Gastrocnemius medialis (tissue), 4 donors: ENCODE measurements at regions of chr7 and their contacts with region 1.

Region 1: GRCh38 chr7:8217200-8218068 is 44.5 kb downstream of the ICA1 start:
- DNase-seq: no peak
- ATAC-seq: peak; percentile 60 to 63
- H3K4me3 ChIP-seq: no peak overlapping the region
- H3K27ac ChIP-seq: no peak overlapping the region
- H3K4me1 ChIP-seq: peaks cover 0 to 8% of the 10 kb centered on the region in 2 donors
- H3K27me3 ChIP-seq: no peaks in the 10 kb centered on the region
- CTCF ChIP-seq: peak; percentile 65 to 80 (median 72)
- POLR2A ChIP-seq: no peak

Region 2: DNA sequence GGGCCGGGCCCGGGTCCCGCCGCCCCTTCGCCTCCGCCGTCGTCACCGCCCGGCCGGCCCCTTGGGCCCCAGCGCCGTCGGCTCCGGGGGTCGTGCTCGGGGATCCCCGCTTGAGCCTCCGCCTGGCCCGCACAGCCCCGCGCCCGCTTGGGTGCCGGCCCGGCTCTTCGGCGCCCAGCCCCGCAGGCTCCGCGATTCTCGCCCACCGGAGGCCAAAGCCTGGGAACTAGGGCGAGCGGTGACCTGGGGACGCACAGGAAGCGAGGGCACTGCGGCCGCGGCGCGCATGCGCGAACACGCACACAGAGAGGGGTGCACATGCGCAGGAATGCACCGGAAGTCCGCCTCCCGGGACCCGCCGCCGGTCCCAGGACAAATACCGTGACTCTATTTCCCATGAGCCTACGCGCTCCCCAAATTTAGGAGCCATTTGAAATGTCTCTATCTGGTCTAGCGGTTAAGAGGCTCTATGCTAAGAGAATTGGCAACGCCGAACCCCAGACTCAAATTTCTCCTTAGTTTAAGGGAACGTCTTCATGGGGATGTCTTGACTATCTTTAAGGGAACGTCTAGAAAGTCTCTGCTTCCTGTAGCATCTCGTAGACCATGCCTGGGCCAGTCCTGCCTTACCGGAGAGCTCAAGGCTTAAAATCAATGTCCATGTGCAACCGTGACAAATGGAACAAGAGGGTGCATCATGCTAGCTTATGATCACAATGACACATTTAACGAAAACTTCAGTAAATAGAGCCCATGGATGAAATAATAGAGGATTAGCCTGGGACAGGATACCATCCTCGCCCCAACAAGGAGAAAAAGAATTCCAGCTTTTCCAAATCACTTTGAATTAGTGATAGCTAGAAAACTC is 1510.5 kb before region 1 on chr7 and contains the start of gene ZNF12:
- in situ Hi-C with region 1: no loop called
- intact Hi-C with region 1: loop called (anchors 10 kb)
- DNase-seq: peak; percentile 93 to 96
- ATAC-seq: peak; percentile 98
- H3K4me3 ChIP-seq: peak within 1 kb of the TSS; percentile 75 to 99 (median 88)
- H3K27ac ChIP-seq: peak within 1 kb of the TSS; percentile 80 to 90 (median 84)
- H3K4me1 ChIP-seq: peaks cover 22 to 23% of the 10 kb centered on the region in 2 donors
- H3K27me3 ChIP-seq: no peaks in the 10 kb centered on the region
- CTCF ChIP-seq: peak in 1 of 5 experiments; percentile 10
- POLR2A ChIP-seq: peak; percentile 63 to 81
- total RNA-seq, gene ZNF12: 4.5 to 8.9 (median 5.3) TPM

Region 3: GRCh38 chr7:7424151-7424873 is 793.1 kb before region 1 on chr7:
- in situ Hi-C with region 1: loop called (anchors 10 to 25 kb)
- intact Hi-C with region 1: loop called (anchors 2 kb)
- DNase-seq: peak; percentile 11 to 33
- ATAC-seq: peak; percentile 76 to 87
- H3K4me3 ChIP-seq: peak overlapping the region; percentile 39 to 59 (median 52)
- H3K27ac ChIP-seq: no peak overlapping the region
- H3K4me1 ChIP-seq: no peaks in the 10 kb centered on the region
- H3K27me3 ChIP-seq: no peaks in the 10 kb centered on the region
- CTCF ChIP-seq: peak; percentile 46 to 72 (median 62)
- POLR2A ChIP-seq: no peak

Region 4: GRCh38 chr7:7595451-7595850 is 622.0 kb before region 1 on chr7:
- in situ Hi-C with region 1: no loop called
- intact Hi-C with region 1: loop called (anchors 5 kb)
- DNase-seq: no peak
- ATAC-seq: no peak
- H3K4me3 ChIP-seq: no peak overlapping the region
- H3K27ac ChIP-seq: no peak overlapping the region
- H3K4me1 ChIP-seq: no peaks in the 10 kb centered on the region
- H3K27me3 ChIP-seq: no peaks in the 10 kb centered on the region
- CTCF ChIP-seq: peak in 1 of 5 experiments; percentile 28
- POLR2A ChIP-seq: no peak

Region 5: DNA sequence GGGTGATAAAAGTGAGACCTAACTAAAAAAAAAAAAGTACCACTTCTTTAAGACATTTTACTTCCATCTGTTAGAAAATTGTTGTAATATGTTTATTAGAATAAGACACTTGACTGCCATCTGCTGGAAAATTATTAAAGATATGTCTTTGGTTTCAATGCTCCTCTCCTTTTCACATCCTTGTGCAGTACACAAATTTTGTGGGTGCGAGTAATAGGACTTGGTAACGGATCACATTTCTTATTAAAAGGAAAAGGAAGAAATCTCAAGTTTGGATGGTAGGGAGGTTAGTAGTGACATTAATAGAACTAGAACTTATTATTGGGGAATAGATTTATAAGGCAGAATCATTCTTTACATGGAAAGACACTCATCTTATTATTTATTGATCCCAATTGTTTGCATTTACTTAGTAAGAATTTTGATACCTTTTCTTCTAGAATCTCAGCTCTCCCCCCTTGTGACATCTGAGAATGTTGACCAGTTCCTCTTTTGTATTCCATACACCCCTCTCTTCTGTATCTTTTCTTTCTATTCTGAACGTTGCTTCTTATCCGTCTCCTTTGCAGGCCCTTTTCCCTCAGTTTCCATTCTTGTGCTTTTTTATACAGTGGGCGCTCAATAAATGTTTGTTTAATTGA is 456.0 kb before region 1 on chr7:
- in situ Hi-C with region 1: loop called in 2 of 4 experiments (anchors 10 to 25 kb)
- intact Hi-C with region 1: loop called (anchors 5 kb)
- DNase-seq: no peak
- ATAC-seq: peak; percentile 62 to 63
- H3K4me3 ChIP-seq: peak overlapping the region; percentile 32 to 50 (median 40)
- H3K27ac ChIP-seq: peak overlapping the region; percentile 21 to 70 (median 58)
- H3K4me1 ChIP-seq: peaks cover 9 to 14% of the 10 kb centered on the region in 2 donors
- H3K27me3 ChIP-seq: no peaks in the 10 kb centered on the region
- CTCF ChIP-seq: peak; percentile 29 to 58 (median 40)
- POLR2A ChIP-seq: no peak

Region 6: DNA sequence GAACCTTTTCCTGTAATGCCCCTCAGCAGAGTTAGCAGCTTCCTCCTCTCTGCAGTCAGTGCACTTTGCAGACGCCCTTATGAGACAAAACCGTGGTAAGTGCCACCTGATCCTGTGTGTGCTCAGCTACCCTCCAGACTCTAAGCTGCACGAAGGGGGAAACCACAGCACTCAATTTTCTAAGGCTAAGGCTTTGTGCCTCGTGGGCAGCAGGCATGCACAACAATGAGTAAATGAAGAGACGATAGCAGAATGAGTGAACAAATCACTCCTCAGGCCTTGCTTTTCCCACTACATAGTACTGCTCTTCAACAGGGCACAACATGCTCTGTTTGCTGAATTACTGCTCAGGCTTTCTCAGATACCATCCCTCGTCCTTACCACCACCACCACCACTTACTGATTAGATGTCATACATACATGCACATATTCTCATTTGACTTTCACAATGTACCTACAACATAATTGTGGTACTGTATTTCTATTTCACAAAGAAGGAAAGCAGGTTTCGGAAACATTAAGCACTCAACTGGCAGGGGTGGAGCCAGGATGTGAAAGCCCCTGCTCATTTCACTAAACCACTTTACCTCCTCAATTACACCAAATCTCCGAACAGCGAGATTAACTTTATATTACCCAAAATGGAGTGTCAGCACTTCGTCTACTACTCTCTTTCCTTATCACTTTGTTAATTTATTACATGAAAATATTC is 40.9 kb before region 1 on chr7:
- in situ Hi-C with region 1: no loop called
- intact Hi-C with region 1: loop called (anchors 5 kb)
- DNase-seq: no peak
- ATAC-seq: no peak
- H3K4me3 ChIP-seq: no peak overlapping the region
- H3K27ac ChIP-seq: no peak overlapping the region
- H3K4me1 ChIP-seq: peaks cover 15 to 28% of the 10 kb centered on the region in 2 donors
- H3K27me3 ChIP-seq: no peaks in the 10 kb centered on the region
- CTCF ChIP-seq: no peak
- POLR2A ChIP-seq: no peak

Region 7: DNA sequence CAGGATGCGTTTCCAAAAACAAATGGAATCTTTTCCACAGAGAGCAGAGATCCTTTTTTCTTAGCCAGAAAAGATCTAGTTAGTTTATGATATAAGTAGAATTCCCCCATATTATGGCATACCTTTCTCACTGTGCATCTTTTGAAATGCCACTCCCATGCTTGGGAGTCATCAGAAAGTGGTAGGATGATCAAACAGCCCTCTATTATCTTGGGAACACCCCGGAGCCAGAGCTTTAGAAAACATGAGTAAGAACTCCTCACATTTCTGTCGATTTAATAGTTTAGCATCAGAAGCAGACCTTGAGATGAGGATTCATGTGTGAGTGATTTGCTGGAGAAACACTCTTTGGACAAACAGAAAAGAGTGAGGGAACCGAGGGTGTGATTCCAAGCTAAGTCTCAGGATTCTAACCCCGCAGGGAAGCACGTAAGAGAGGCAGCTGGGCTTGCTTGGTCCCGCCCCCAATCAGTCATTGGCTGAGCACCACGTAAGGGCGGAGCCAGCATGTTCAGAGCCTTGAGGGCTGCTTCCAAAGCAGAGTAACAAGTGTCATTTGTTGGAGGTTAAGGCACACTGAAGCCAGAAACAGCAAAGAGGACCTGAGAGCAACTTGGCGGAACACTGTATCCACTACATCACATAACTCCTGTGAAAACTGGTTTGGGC is 172.3 kb after region 1 on chr7:
- in situ Hi-C with region 1: no loop called
- intact Hi-C with region 1: no loop called
- DNase-seq: no peak
- ATAC-seq: no peak
- H3K4me3 ChIP-seq: no peak overlapping the region
- H3K27ac ChIP-seq: no peak overlapping the region
- H3K4me1 ChIP-seq: no peaks in the 10 kb centered on the region
- H3K27me3 ChIP-seq: no peaks in the 10 kb centered on the region
- CTCF ChIP-seq: no peak
- POLR2A ChIP-seq: no peak